B cell (primary cell): ENCODE measurements at regions of chr7 and their contacts with region 1.

Region 1: GRCh38 chr7:26356929-26357798 is 65.5 kb downstream of the SNX10 start:
- DNase-seq: no peak
- ATAC-seq: no peak
- H3K4me3 ChIP-seq: no peak overlapping the region
- H3K4me3 Mint-ChIP-seq: no peak overlapping the region
- H3K27ac ChIP-seq: no peak overlapping the region
- H3K27ac Mint-ChIP-seq: peak overlapping the region; percentile 58
- H3K4me1 ChIP-seq: peaks cover 21 to 37% of the 10 kb centered on the region in 2 donors
- H3K4me1 Mint-ChIP-seq: peaks cover 42% of the 10 kb centered on the region
- H3K27me3 ChIP-seq: no peaks in the 10 kb centered on the region
- H3K27me3 Mint-ChIP-seq: no peaks in the 10 kb centered on the region
- CTCF ChIP-seq: no peak

Region 2: GRCh38 chr7:26329520-26330255 is 27.5 kb before region 1 on chr7:
- CTCF ChIA-PET with region 1: interaction called, 6 read pairs
- POLR2A ChIA-PET with region 1: no interaction called
- intact Hi-C with region 1: loop called (anchors 5 kb)
- DNase-seq: peak; percentile 65
- ATAC-seq: peak; percentile 83
- H3K4me3 ChIP-seq: peak overlapping the region in 3 of 5 experiments; percentile 3 to 46 (median 22)
- H3K4me3 Mint-ChIP-seq: peak overlapping the region; percentile 83
- H3K27ac ChIP-seq: peak overlapping the region; percentile 45 to 74
- H3K27ac Mint-ChIP-seq: peak overlapping the region; percentile 97
- H3K4me1 ChIP-seq: peaks cover 59 to 62% of the 10 kb centered on the region in 2 donors
- H3K4me1 Mint-ChIP-seq: peaks cover 78% of the 10 kb centered on the region
- H3K27me3 ChIP-seq: no peaks in the 10 kb centered on the region
- H3K27me3 Mint-ChIP-seq: no peaks in the 10 kb centered on the region
- CTCF ChIP-seq: no peak